HepG2 (cell line): ENCODE measurements at regions of chr20 and their contacts with region 1.

Region 1: DNA sequence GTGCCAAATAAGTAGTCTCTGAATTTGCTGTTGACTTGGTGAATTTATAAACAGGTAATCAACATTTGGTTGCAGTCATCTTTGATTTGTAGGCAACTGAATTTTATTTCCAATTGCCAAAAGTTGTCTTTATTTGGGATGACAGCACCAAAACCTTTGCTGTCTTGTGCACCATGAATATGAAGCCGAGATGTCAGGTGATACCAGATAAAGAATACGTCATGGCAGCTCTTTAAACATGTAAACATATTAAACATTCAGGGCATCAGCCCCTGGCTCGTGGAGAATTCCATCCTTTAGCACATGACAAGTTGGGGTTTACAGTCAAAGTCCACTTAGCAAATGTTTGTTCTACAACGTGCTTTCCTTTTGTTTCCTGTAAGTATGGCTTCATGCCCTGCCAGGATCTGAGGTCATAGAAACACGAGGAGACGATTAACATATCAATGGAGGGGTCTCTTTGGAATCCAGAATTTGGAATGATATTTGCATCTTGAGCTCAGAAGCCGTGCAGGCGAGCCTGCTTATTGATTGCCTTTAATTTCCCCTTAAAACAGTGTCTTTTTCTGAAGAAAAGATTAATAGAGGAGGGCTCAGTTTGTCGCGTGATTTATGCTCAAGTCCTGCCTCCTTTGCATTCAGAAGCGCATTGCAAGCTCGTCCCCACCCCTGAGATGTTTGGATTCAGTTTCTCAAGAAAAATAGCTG is 170.2 kb upstream of the ZNF217 start:
- DNase-seq: peak; percentile 100
- ATAC-seq: peak; percentile 95
- H3K4me3 ChIP-seq: no peak overlapping the region; a peak in 1 of 6 replicates
- H3K27ac ChIP-seq: peak overlapping the region; percentile 89
- H3K4me1 ChIP-seq: peaks cover 77% of the 10 kb centered on the region
- H3K27me3 ChIP-seq: no peaks in the 10 kb centered on the region
- CTCF ChIP-seq: no peak
- EP300 ChIP-seq: peak; percentile 95 to 99; a peak in 3 of 4 replicates
- POLR2A ChIP-seq: peak; percentile 26 to 48; a peak in 2 of 4 replicates
- RAD21 ChIP-seq: 0 out of 2 replicates have a peak, but pooled peaks have one; percentile 15

Region 2: GRCh38 chr20:53594068-53595017 is 169.5 kb before region 1 on chr20:
- CTCF ChIA-PET with region 1: no interaction called
- POLR2A ChIA-PET with region 1: interaction called, 27 read pairs
- in situ Hi-C with region 1: no loop called
- intact Hi-C with region 1: no loop called
- DNase-seq: peak; percentile 89
- ATAC-seq: peak; percentile 88
- H3K4me3 ChIP-seq: peak overlapping the region; percentile 89 to 98 (median 90)
- H3K27ac ChIP-seq: peak overlapping the region; percentile 87
- H3K4me1 ChIP-seq: peaks cover 43% of the 10 kb centered on the region
- H3K27me3 ChIP-seq: no peaks in the 10 kb centered on the region; a peak in 1 of 5 replicates
- CTCF ChIP-seq: peak; percentile 88
- EP300 ChIP-seq: peak in 1 of 2 experiments; percentile 14; a peak in 1 of 4 replicates
- POLR2A ChIP-seq: peak; percentile 52 to 60
- RAD21 ChIP-seq: peak; percentile 91

Region 3: DNA sequence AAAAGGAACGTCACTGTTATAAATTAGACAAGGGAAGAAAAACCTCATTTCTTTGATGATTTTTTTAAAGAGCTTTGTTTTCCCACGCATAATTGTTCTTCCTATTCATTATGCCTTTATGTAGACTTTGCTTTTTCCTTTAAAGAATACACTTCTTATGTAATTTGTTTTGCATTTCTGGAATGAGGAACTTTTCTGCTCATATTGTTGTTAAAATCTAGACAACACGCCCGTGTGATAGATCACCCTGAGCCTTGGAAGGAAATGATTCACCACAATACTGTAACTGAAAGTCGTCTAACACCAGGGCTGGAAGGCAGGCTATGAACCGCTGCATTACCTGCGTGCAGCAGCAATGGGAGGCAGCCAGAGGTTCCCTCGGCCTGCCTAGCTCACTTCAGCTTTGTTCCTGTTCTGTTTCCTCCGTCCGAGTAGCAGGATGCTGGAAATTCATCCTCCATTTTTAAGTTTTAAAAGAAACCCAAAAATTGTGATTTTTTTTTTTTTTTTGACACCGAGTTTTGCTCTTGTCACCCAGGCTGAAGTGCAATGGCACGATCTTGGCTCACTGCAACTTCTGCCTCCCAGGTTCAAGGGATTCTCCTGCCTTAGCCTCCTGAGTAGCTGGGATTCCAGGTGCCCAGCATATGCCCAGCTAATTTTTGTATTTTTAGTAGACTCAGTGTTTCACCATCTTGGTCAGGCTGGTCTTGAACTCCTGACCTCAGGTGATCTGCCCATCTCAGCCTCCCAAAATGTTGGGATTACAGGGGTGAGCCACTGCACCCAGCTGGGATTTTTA is 120.6 kb before region 1 on chr20:
- CTCF ChIA-PET with region 1: no interaction called
- POLR2A ChIA-PET with region 1: interaction called, 14 read pairs
- in situ Hi-C with region 1: no loop called
- intact Hi-C with region 1: no loop called
- DNase-seq: no peak
- ATAC-seq: peak; percentile 77
- H3K4me3 ChIP-seq: peak overlapping the region; percentile 34 to 64 (median 48); a peak in 5 of 6 replicates
- H3K27ac ChIP-seq: peak overlapping the region; percentile 93
- H3K4me1 ChIP-seq: peaks cover 81% of the 10 kb centered on the region
- H3K27me3 ChIP-seq: no peaks in the 10 kb centered on the region
- CTCF ChIP-seq: no peak
- EP300 ChIP-seq: no peak; a peak in 1 of 4 replicates
- POLR2A ChIP-seq: peak in 1 of 2 experiments; percentile 77; a peak in 2 of 4 replicates
- RAD21 ChIP-seq: no peak

Region 4: DNA sequence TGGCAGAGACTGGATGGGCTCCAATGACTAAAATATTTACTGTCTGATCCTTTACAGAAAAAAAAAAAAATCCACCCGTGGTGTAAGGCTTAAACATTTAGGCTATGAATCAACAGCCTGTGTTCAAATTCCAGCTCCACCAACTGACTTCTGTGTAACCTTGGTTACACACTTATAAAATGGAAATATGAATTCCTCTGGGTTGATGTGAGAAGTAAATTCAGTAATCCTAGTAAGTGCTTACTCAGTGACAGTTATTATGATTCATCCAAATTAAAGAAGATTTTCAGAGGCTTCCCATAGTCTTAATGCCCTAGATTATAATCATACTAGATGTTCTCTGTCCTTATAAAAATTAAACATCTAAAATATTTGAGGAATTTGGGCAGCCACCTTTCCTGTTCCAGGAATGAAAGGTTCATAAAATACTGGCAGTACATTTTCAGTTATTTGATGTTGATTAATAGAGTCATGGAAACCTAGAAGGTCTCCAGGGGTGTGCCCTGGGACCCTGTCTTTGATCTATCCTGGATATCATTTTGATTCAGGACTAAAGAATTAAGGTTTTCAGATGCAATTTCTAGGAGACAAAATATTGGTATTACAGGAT is 10.0 kb after region 1 on chr20:
- CTCF ChIA-PET with region 1: no interaction called
- POLR2A ChIA-PET with region 1: interaction called, 40 read pairs
- in situ Hi-C with region 1: no loop called
- intact Hi-C with region 1: loop called (anchors 1 kb)
- DNase-seq: peak; percentile 66
- ATAC-seq: peak; percentile 51
- H3K4me3 ChIP-seq: no peak overlapping the region
- H3K27ac ChIP-seq: peak overlapping the region; percentile 56
- H3K4me1 ChIP-seq: peaks cover 76% of the 10 kb centered on the region
- H3K27me3 ChIP-seq: no peaks in the 10 kb centered on the region
- CTCF ChIP-seq: no peak
- EP300 ChIP-seq: no peak
- POLR2A ChIP-seq: no peak
- RAD21 ChIP-seq: no peak

Region 5: GRCh38 chr20:53786445-53787267 is 22.8 kb after region 1 on chr20:
- CTCF ChIA-PET with region 1: no interaction called
- POLR2A ChIA-PET with region 1: interaction called, 35 read pairs
- in situ Hi-C with region 1: no loop called
- intact Hi-C with region 1: no loop called
- DNase-seq: peak; percentile 56
- ATAC-seq: peak; percentile 77
- H3K4me3 ChIP-seq: peak overlapping the region; percentile 26 to 52 (median 27)
- H3K27ac ChIP-seq: peak overlapping the region; percentile 72
- H3K4me1 ChIP-seq: peaks cover 65% of the 10 kb centered on the region
- H3K27me3 ChIP-seq: no peaks in the 10 kb centered on the region
- CTCF ChIP-seq: peak; percentile 46
- EP300 ChIP-seq: peak in 1 of 2 experiments; percentile 82; a peak in 2 of 4 replicates
- POLR2A ChIP-seq: no peak
- RAD21 ChIP-seq: peak; percentile 40

Region 6: GRCh38 chr20:53915446-53916172 is 151.7 kb after region 1 on chr20:
- CTCF ChIA-PET with region 1: no interaction called
- POLR2A ChIA-PET with region 1: interaction called, 10 read pairs
- in situ Hi-C with region 1: no loop called
- intact Hi-C with region 1: no loop called
- DNase-seq: peak; percentile 84
- ATAC-seq: peak; percentile 92
- H3K4me3 ChIP-seq: peak overlapping the region; percentile 73 to 88 (median 80)
- H3K27ac ChIP-seq: peak overlapping the region; percentile 17
- H3K4me1 ChIP-seq: peaks cover 48% of the 10 kb centered on the region
- H3K27me3 ChIP-seq: peaks cover 0 to 2% of the 10 kb centered on the region in 2 experiments; a peak in 1 of 5 replicates
- CTCF ChIP-seq: peak; percentile 96
- EP300 ChIP-seq: no peak; a peak in 1 of 4 replicates
- POLR2A ChIP-seq: no peak
- RAD21 ChIP-seq: peak; percentile 83